B cell (primary cell): ENCODE measurements at regions of chr3 and their contacts with region 1.

Region 1: GRCh38 chr3:3126477-3127431 is at the start of gene TRNT1:
- DNase-seq: peak; percentile 97
- ATAC-seq: peak; percentile 97
- H3K4me3 ChIP-seq: peak within 1 kb of the TSS; percentile 72 to 97 (median 86)
- H3K4me3 Mint-ChIP-seq: peak within 1 kb of the TSS; percentile 97
- H3K27ac ChIP-seq: peak within 1 kb of the TSS; percentile 89 to 97
- H3K27ac Mint-ChIP-seq: peak within 1 kb of the TSS; percentile 97
- H3K4me1 ChIP-seq: peaks cover 15 to 24% of the 10 kb centered on the region in 2 donors
- H3K4me1 Mint-ChIP-seq: peaks cover 30% of the 10 kb centered on the region
- H3K27me3 ChIP-seq: no peaks in the 10 kb centered on the region
- H3K27me3 Mint-ChIP-seq: no peaks in the 10 kb centered on the region
- CTCF ChIP-seq: no peak
- total RNA-seq, gene TRNT1: 40.6 and 52.8 TPM in 2 replicates

Region 2: GRCh38 chr3:3110299-3110630 is 16.5 kb before region 1 on chr3 and contains the start of gene IL5RA:
- CTCF ChIA-PET with region 1: no interaction called
- POLR2A ChIA-PET with region 1: no interaction called
- intact Hi-C with region 1: loop called (anchors 2 kb)
- DNase-seq: peak; percentile 72
- ATAC-seq: peak; percentile 70
- H3K4me3 ChIP-seq: peak within 1 kb of the TSS in 2 of 5 experiments; percentile 17 to 28
- H3K4me3 Mint-ChIP-seq: peak within 1 kb of the TSS; percentile 66
- H3K27ac ChIP-seq: peak within 1 kb of the TSS; percentile 53 to 71
- H3K27ac Mint-ChIP-seq: peak within 1 kb of the TSS; percentile 90
- H3K4me1 ChIP-seq: peaks cover 16 to 25% of the 10 kb centered on the region in 2 donors
- H3K4me1 Mint-ChIP-seq: peaks cover 46% of the 10 kb centered on the region
- H3K27me3 ChIP-seq: no peaks in the 10 kb centered on the region
- H3K27me3 Mint-ChIP-seq: no peaks in the 10 kb centered on the region
- CTCF ChIP-seq: no peak
- total RNA-seq, gene IL5RA: 0.75 and 1.0 TPM in 2 replicates

Region 3: GRCh38 chr3:4303187-4304123 is 1176.7 kb after region 1 on chr3 and contains the start of gene SETMAR:
- CTCF ChIA-PET with region 1: no interaction called
- POLR2A ChIA-PET with region 1: no interaction called
- intact Hi-C with region 1: loop called (anchors 1 kb)
- DNase-seq: peak; percentile 91
- ATAC-seq: peak; percentile 94
- H3K4me3 ChIP-seq: peak within 1 kb of the TSS; percentile 62 to 88 (median 85)
- H3K4me3 Mint-ChIP-seq: peak within 1 kb of the TSS; percentile 100
- H3K27ac ChIP-seq: peak within 1 kb of the TSS; percentile 64 to 79
- H3K27ac Mint-ChIP-seq: peak within 1 kb of the TSS; percentile 99
- H3K4me1 ChIP-seq: peaks cover 0 to 12% of the 10 kb centered on the region in 2 donors
- H3K4me1 Mint-ChIP-seq: peaks cover 16% of the 10 kb centered on the region
- H3K27me3 ChIP-seq: no peaks in the 10 kb centered on the region
- H3K27me3 Mint-ChIP-seq: no peaks in the 10 kb centered on the region
- CTCF ChIP-seq: no peak
- total RNA-seq, gene SETMAR: 6.8 and 7.6 TPM in 2 replicates